K562 (cell line): ENCODE measurements at regions of chr6 and their contacts with region 1.

Region 1: DNA sequence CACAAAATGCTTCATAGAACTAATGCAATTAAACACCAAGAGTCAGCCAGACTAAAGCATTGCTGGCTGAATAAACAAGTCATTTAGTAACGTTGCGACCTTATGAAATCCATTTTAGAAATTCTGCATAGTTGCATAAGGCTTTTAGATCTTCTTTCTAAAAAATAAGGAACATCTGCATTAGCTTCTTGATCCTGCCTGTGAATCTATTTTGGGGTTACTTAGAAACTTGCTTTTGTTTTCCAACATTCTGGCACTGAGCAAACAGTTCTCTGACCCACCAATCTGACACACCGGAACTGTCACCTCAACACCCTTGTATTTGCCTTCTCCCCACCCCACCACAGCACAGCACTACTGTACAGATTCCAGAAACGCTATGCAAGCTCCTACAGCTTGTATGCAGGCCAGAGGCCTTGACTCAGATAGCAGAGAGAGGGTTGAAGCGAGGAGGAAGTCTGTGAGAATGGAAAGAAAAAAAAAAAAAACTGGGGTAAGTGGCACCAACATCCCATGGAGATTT is 55.0 kb downstream of the KIF13A start:
- DNase-seq: peak in 3 of 4 experiments; percentile 35 to 82 (median 71)
- ATAC-seq: peak; percentile 84
- H3K4me3 ChIP-seq: no peak overlapping the region
- H3K27ac ChIP-seq: peak overlapping the region; percentile 55; the same call in 2 of the 3 replicates
- H3K4me1 ChIP-seq: peaks cover 31 to 66% of the 10 kb centered on the region in 2 experiments
- H3K27me3 ChIP-seq: no peaks in the 10 kb centered on the region
- CTCF ChIP-seq: no peak
- EP300 ChIP-seq: peak; percentile 53; the same call in 1 of the 2 replicates
- POLR2A ChIP-seq: no peak
- RAD21 ChIP-seq: peak in 1 of 2 experiments; percentile 45; a peak in 2 of 4 replicates

Region 2: GRCh38 chr6:17945111-17945510 is 12.7 kb after region 1 on chr6:
- CTCF ChIA-PET with region 1: no interaction called
- POLR2A ChIA-PET with region 1: interaction called, 10 read pairs
- in situ Hi-C with region 1: no loop called
- intact Hi-C with region 1: no loop called
- DNase-seq: no peak
- ATAC-seq: no peak
- H3K4me3 ChIP-seq: no peak overlapping the region
- H3K27ac ChIP-seq: no peak overlapping the region
- H3K4me1 ChIP-seq: no peaks in the 10 kb centered on the region; a peak in 1 of 5 replicates
- H3K27me3 ChIP-seq: no peaks in the 10 kb centered on the region
- CTCF ChIP-seq: no peak
- EP300 ChIP-seq: no peak
- POLR2A ChIP-seq: no peak
- RAD21 ChIP-seq: no peak

Region 3: GRCh38 chr6:17962436-17963031 is 30.1 kb after region 1 on chr6:
- CTCF ChIA-PET with region 1: no interaction called
- POLR2A ChIA-PET with region 1: interaction called, 6 read pairs
- in situ Hi-C with region 1: no loop called
- intact Hi-C with region 1: loop called (anchors 2 kb)
- DNase-seq: peak; percentile 96 to 98 (median 98)
- ATAC-seq: peak; percentile 99
- H3K4me3 ChIP-seq: no peak overlapping the region
- H3K27ac ChIP-seq: peak overlapping the region; percentile 27; the same call in 2 of the 3 replicates
- H3K4me1 ChIP-seq: peaks cover 29 to 51% of the 10 kb centered on the region in 2 experiments
- H3K27me3 ChIP-seq: no peaks in the 10 kb centered on the region
- CTCF ChIP-seq: no peak
- EP300 ChIP-seq: peak; percentile 93
- POLR2A ChIP-seq: no peak
- RAD21 ChIP-seq: peak; percentile 27 to 54

Region 4: DNA sequence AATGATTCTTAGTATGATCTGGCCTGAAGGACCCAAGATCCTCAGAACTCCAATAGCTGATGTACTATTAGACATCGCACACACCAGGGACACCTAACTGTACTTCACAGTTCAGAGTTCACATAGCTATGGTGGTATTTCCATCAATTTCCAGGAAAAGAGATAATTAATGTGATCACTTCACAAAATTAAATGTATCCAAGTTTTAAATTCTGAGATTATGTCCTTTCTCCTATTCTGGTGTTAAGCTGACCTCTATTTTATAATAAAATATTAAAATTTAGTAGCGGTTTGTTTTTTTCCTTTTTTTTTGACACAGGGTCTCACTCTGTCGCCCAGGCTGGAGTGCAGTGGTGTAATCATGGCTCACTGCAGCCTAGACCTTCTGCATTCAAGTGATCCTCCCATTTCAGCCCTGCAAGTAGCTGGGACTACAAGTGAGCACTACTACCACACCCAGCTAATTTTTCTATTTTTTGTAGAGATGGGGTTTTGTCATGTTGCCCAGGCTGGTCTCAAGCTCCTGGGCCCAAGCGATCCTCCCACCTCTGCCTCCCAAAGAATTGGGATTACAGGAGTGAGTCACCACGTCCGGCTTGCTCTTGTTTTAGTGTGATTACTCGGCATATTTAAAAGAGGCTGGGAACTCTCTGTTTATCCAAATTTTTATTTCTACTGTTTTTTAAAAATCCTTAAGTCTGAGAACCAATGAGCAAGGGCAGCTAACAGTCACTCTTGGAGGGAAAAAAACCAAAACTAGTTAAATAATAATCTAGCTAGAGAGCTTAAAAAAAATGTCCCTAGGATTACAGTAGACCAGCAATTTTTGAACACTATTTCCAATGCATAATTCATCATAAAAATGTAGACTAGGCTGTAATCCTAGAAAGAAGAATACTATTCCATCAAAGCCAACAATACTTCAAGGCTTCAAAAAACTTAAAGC is 39.0 kb after region 1 on chr6:
- CTCF ChIA-PET with region 1: no interaction called
- POLR2A ChIA-PET with region 1: interaction called, 3 read pairs
- in situ Hi-C with region 1: no loop called
- intact Hi-C with region 1: loop called (anchors 2 kb)
- DNase-seq: peak in 1 of 4 experiments; percentile 91
- ATAC-seq: peak; percentile 73
- H3K4me3 ChIP-seq: no peak overlapping the region; the same call in 1 of the 2 replicates
- H3K27ac ChIP-seq: peak overlapping the region; percentile 79
- H3K4me1 ChIP-seq: peaks cover 21 to 57% of the 10 kb centered on the region in 2 experiments
- H3K27me3 ChIP-seq: no peaks in the 10 kb centered on the region
- CTCF ChIP-seq: no peak
- EP300 ChIP-seq: peak; percentile 62; the same call in 1 of the 2 replicates
- POLR2A ChIP-seq: no peak
- RAD21 ChIP-seq: 0 out of 4 replicates have a peak, but pooled peaks of 1 of the 2 experiments have one; percentile 15